Activated CD4-positive, alpha-beta T cell treated with anti-CD3 and anti-CD28 coated beads for 36 hours (primary cell): ENCODE measurements at regions of chr17 and their contacts with region 1.

Region 1: GRCh38 chr17:50372758-50373556 is at the starts of genes EME1 and MRPL27:
- DNase-seq: peak; percentile 89
- ATAC-seq: peak; percentile 95
- H3K4me3 Mint-ChIP-seq: peak within 1 kb of the TSS; percentile 89
- H3K27ac Mint-ChIP-seq: peak within 1 kb of the TSS; percentile 99
- H3K4me1 Mint-ChIP-seq: peaks cover 22% of the 10 kb centered on the region
- H3K27me3 Mint-ChIP-seq: no peaks in the 10 kb centered on the region
- total RNA-seq, gene EME1: 38.3 to 40.8 TPM
- total RNA-seq, gene MRPL27: 40.1 to 56.2 TPM

Region 2: GRCh38 chr17:50151041-50151936 is 221.7 kb before region 1 on chr17:
- CTCF ChIA-PET with region 1: interaction called, 3 read pairs
- POLR2A ChIA-PET with region 1: no interaction called
- intact Hi-C with region 1: loop called in 1 of 2 experiments (anchors 2 kb)
- DNase-seq: peak; percentile 95
- ATAC-seq: peak; percentile 66
- H3K4me3 Mint-ChIP-seq: peak overlapping the region; percentile 90
- H3K27ac Mint-ChIP-seq: peak overlapping the region; percentile 96
- H3K4me1 Mint-ChIP-seq: peaks cover 40% of the 10 kb centered on the region
- H3K27me3 Mint-ChIP-seq: no peaks in the 10 kb centered on the region

Region 3: GRCh38 chr17:50361561-50362480 is 11.1 kb before region 1 on chr17:
- CTCF ChIA-PET with region 1: interaction called, 28 read pairs
- POLR2A ChIA-PET with region 1: interaction called, 3 read pairs
- intact Hi-C with region 1: no loop called
- DNase-seq: peak; percentile 76
- ATAC-seq: peak; percentile 95
- H3K4me3 Mint-ChIP-seq: no peak overlapping the region
- H3K27ac Mint-ChIP-seq: peak overlapping the region; percentile 80
- H3K4me1 Mint-ChIP-seq: peaks cover 8% of the 10 kb centered on the region
- H3K27me3 Mint-ChIP-seq: no peaks in the 10 kb centered on the region

Region 4: DNA sequence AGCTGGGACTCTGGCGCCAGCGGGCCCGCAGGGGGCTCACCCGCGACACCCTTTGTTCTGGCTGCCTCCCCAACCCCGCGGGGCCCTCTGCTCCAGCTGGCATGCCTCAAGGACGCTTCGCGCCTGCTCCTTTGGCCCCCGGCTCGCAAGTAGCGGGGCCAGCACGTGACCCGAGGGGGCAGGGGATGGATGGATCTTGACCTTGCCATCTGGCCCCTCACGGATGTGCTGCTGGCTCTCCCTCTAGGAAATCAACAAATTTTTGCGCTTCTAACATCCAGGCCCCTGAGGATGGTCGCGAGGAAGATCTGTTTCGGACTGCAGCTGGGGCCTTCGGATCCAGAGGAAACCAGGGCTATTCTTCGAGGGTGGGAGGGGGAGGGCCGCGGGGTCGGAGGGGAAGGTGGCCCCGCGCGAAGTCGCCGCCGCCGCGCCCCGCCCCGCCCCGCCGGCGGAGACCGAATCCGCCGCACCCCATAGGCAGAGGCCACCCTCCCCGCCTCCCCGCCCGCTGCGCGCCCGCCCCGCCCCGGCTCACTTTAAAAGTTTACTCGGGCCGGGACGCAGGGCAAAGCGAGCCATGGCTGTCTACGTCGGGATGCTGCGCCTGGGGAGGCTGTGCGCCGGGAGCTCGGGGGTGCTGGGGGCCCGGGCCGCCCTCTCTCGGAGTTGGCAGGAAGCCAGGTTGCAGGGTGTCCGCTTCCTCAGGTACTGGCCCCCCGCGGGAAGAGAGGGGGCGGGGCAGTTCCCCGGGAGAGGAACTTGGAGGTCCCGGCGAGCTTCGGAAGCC is 52.9 kb after region 1 on chr17 and contains the start of gene ACSF2:
- CTCF ChIA-PET with region 1: no interaction called
- POLR2A ChIA-PET with region 1: interaction called, 3 read pairs
- intact Hi-C with region 1: loop called in 1 of 2 experiments (anchors 1 kb)
- DNase-seq: peak; percentile 86
- ATAC-seq: peak; percentile 84
- H3K4me3 Mint-ChIP-seq: peak within 1 kb of the TSS; percentile 76
- H3K27ac Mint-ChIP-seq: peak within 1 kb of the TSS; percentile 70
- H3K4me1 Mint-ChIP-seq: peaks cover 32% of the 10 kb centered on the region
- H3K27me3 Mint-ChIP-seq: no peaks in the 10 kb centered on the region
- total RNA-seq, gene ACSF2: 15.0 to 15.7 TPM

Region 5: GRCh38 chr17:50541716-50542688 is 169.0 kb after region 1 on chr17:
- CTCF ChIA-PET with region 1: no interaction called
- POLR2A ChIA-PET with region 1: no interaction called
- intact Hi-C with region 1: loop called in 1 of 2 experiments (anchors 1 kb)
- DNase-seq: peak; percentile 91
- ATAC-seq: peak; percentile 87
- H3K4me3 Mint-ChIP-seq: peak overlapping the region; percentile 72
- H3K27ac Mint-ChIP-seq: peak overlapping the region; percentile 82
- H3K4me1 Mint-ChIP-seq: peaks cover 11% of the 10 kb centered on the region
- H3K27me3 Mint-ChIP-seq: peaks cover 7% of the 10 kb centered on the region

Region 6: GRCh38 chr17:51260125-51260880 is 887.3 kb after region 1 on chr17 and contains the start of gene UTP18:
- CTCF ChIA-PET with region 1: no interaction called
- POLR2A ChIA-PET with region 1: no interaction called
- intact Hi-C with region 1: loop called in 1 of 2 experiments (anchors 2 kb)
- DNase-seq: peak; percentile 98
- ATAC-seq: peak; percentile 84
- H3K4me3 Mint-ChIP-seq: peak within 1 kb of the TSS; percentile 84
- H3K27ac Mint-ChIP-seq: peak within 1 kb of the TSS; percentile 97
- H3K4me1 Mint-ChIP-seq: peaks cover 61% of the 10 kb centered on the region
- H3K27me3 Mint-ChIP-seq: no peaks in the 10 kb centered on the region
- total RNA-seq, gene UTP18: 49.3 to 74.0 TPM